WTC11 (cell line): ENCODE measurements at regions of chr1 and their contacts with region 1.

Region 1: GRCh38 chr1:206489980-206490770 is 17.2 kb upstream of the RASSF5 start:
- DNase-seq: peak; percentile 91
- ATAC-seq: peak; percentile 95
- H3K4me3 Mint-ChIP-seq: no peak overlapping the region
- H3K27ac Mint-ChIP-seq: no peak overlapping the region
- H3K4me1 Mint-ChIP-seq: no peaks in the 10 kb centered on the region
- H3K27me3 Mint-ChIP-seq: no peaks in the 10 kb centered on the region
- CTCF ChIP-seq: peak; percentile 94

Region 2: GRCh38 chr1:206445116-206445515 is 45.1 kb before region 1 on chr1:
- CTCF ChIA-PET with region 1: no interaction called
- POLR2A ChIA-PET with region 1: no interaction called
- DNase-seq: no peak
- ATAC-seq: no peak
- H3K4me3 Mint-ChIP-seq: no peak overlapping the region
- H3K27ac Mint-ChIP-seq: no peak overlapping the region
- H3K4me1 Mint-ChIP-seq: no peaks in the 10 kb centered on the region
- H3K27me3 Mint-ChIP-seq: no peaks in the 10 kb centered on the region
- CTCF ChIP-seq: no peak

Region 3: DNA sequence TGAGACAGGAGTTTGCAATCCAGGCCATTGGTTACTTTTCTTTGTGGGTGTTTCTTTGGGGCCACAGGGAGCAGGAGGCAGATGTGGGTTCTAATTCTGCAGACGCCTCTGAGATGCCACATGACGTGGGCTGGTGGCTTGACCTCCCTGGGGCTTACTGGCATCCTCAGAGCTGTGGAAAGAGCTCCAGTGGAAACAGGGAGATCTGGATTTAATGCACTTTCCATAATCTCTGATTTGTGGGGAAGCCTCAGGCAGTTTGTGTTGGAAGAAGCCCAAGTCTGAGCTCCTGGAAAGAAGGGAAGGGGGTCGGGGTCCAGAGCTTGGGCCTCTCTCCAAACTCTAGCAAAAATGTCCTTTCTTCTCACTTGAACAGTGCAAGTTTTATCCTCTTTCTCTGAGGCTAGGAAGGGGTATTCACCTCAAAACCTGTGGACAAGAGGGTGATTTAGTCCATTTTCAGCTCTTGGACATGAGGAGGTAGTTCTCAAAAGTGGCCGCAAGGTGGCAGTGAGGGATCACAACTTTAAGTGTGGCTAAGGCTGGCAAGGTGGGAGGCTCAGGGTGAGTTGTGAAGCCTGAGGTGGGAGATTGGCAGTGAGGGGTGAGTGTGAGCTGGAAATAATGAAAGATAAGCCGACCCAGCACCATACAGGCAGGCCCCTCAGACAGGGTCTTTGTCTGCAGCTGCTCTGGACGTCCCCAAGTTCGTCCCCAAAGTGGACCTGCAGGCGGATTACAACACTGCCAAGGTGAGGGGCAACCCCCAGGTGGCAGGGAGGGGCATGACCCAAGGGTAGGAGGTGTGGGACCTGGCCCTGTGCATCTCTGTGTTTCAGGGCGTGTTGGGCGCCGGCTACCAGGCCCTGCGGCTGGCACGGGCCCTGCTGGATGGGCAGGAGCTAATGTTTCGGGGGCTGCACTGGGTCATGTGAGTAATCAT is 10.7 kb before region 1 on chr1:
- CTCF ChIA-PET with region 1: interaction called, 43 read pairs
- POLR2A ChIA-PET with region 1: interaction called, 3 read pairs
- DNase-seq: peak; percentile 76
- ATAC-seq: peak; percentile 89
- H3K4me3 Mint-ChIP-seq: no peak overlapping the region
- H3K27ac Mint-ChIP-seq: no peak overlapping the region
- H3K4me1 Mint-ChIP-seq: peaks cover 4% of the 10 kb centered on the region
- H3K27me3 Mint-ChIP-seq: no peaks in the 10 kb centered on the region
- CTCF ChIP-seq: peak; percentile 70

Region 4: DNA sequence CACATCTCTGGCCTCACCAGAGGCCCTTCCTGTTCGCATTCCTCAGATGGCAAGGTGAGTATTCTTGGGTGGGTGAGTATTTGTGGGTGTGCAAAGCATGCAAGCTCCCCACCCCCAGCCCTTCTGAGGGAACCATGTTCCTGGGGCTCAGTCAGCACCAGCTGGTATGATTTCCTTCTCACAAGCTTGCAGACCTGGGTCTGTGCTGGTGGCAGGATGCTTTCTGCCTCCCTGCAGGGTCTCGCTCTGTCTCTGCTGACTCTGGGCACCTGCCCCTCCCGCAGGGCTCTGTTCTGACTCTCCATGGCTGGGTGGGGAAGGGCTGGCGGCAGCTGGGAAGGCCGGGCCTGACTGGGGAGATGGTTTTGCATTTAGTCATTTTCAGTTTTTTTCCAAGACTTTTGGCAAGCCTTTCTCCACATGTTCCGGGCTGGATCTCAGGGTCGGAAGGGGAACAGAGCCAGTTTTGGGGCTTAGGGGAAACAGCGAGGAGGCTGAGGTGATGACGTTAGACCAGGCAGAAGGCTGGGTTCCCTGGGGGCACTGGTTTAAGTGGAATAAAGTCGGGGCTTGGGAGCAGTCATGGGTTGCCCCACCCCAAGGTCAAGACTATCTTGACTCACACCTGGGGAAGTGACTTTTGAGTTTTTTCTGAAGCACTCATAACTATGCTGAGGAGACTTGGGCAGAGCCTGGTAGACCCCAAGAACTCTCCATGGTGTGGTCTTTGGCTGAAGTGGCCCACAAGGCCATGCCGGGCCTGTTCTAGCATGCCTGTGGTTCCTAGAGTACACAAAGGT is 23.3 kb after region 1 on chr1:
- CTCF ChIA-PET with region 1: interaction called, 11 read pairs
- POLR2A ChIA-PET with region 1: no interaction called
- DNase-seq: no peak
- ATAC-seq: no peak
- H3K4me3 Mint-ChIP-seq: no peak overlapping the region
- H3K27ac Mint-ChIP-seq: no peak overlapping the region
- H3K4me1 Mint-ChIP-seq: peaks cover 24% of the 10 kb centered on the region
- H3K27me3 Mint-ChIP-seq: peaks cover 31% of the 10 kb centered on the region
- CTCF ChIP-seq: no peak

Region 5: GRCh38 chr1:206544562-206545257 is 54.5 kb after region 1 on chr1:
- CTCF ChIA-PET with region 1: interaction called, 37 read pairs
- POLR2A ChIA-PET with region 1: no interaction called
- DNase-seq: peak; percentile 96
- ATAC-seq: peak; percentile 96
- H3K4me3 Mint-ChIP-seq: no peak overlapping the region; the same call in 1 of the 2 replicates
- H3K27ac Mint-ChIP-seq: no peak overlapping the region
- H3K4me1 Mint-ChIP-seq: peaks cover 8% of the 10 kb centered on the region
- H3K27me3 Mint-ChIP-seq: no peaks in the 10 kb centered on the region
- CTCF ChIP-seq: peak; percentile 78

Region 6: GRCh38 chr1:206583707-206584648 is 93.8 kb after region 1 on chr1:
- CTCF ChIA-PET with region 1: interaction called, 126 read pairs
- POLR2A ChIA-PET with region 1: interaction called, 3 read pairs
- DNase-seq: peak; percentile 84
- ATAC-seq: peak; percentile 84
- H3K4me3 Mint-ChIP-seq: no peak overlapping the region
- H3K27ac Mint-ChIP-seq: peak overlapping the region; percentile 79
- H3K4me1 Mint-ChIP-seq: peaks cover 4% of the 10 kb centered on the region
- H3K27me3 Mint-ChIP-seq: no peaks in the 10 kb centered on the region
- CTCF ChIP-seq: peak; percentile 90

Region 7: GRCh38 chr1:206663832-206664652 is 173.9 kb after region 1 on chr1:
- CTCF ChIA-PET with region 1: interaction called, 19 read pairs
- POLR2A ChIA-PET with region 1: no interaction called
- DNase-seq: peak; percentile 83
- ATAC-seq: peak; percentile 90
- H3K4me3 Mint-ChIP-seq: peak overlapping the region; percentile 58
- H3K27ac Mint-ChIP-seq: no peak overlapping the region
- H3K4me1 Mint-ChIP-seq: peaks cover 9% of the 10 kb centered on the region; the same call in 1 of the 2 replicates
- H3K27me3 Mint-ChIP-seq: peaks cover 26% of the 10 kb centered on the region
- CTCF ChIP-seq: peak; percentile 86